IMR-90 (cell line): ENCODE measurements at regions of chrX and their contacts with region 1.

Region 1: DNA sequence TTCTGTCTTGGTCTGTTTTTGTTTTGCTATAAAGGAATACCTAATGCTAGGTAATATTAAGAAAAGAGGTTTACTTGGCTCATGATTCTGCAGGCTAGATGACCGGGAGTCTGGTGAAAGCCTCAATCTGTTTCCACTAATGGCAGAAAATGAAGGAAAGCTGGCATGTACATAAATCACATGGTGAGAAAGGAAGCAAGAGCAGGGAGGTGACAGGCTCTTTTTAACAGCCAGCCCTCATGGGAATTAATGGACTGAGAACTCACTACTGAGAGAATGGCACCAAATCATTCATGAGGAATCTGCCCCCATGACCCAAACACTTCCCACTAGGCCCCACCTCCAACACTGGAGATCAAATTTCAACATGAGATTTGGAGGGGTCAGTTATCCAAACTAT is 27.6 kb downstream of the SATL1 start:
- DNase-seq: no peak
- ATAC-seq: no peak
- H3K4me3 ChIP-seq: no peak overlapping the region
- H3K27ac ChIP-seq: no peak overlapping the region
- H3K4me1 ChIP-seq: no peaks in the 10 kb centered on the region
- H3K27me3 ChIP-seq: no peaks in the 10 kb centered on the region
- CTCF ChIP-seq: no peak
- POLR2A ChIP-seq: no peak
- RAD21 ChIP-seq: no peak

Region 2: GRCh38 chrX:85274333-85274732 is 58.4 kb after region 1 on chrX:
- CTCF ChIA-PET with region 1: no interaction called
- POLR2A ChIA-PET with region 1: no interaction called
- dilution Hi-C with region 1: no loop called
- in situ Hi-C with region 1: no loop called
- intact Hi-C with region 1: loop called (anchors 10 kb)
- DNase-seq: no peak
- ATAC-seq: no peak
- H3K4me3 ChIP-seq: no peak overlapping the region
- H3K27ac ChIP-seq: no peak overlapping the region
- H3K4me1 ChIP-seq: no peaks in the 10 kb centered on the region
- H3K27me3 ChIP-seq: no peaks in the 10 kb centered on the region
- CTCF ChIP-seq: no peak
- POLR2A ChIP-seq: no peak
- RAD21 ChIP-seq: no peak